Mammary epithelial cell (primary cell): ENCODE measurements at regions of chr9 and their contacts with region 1.

Region 1: DNA sequence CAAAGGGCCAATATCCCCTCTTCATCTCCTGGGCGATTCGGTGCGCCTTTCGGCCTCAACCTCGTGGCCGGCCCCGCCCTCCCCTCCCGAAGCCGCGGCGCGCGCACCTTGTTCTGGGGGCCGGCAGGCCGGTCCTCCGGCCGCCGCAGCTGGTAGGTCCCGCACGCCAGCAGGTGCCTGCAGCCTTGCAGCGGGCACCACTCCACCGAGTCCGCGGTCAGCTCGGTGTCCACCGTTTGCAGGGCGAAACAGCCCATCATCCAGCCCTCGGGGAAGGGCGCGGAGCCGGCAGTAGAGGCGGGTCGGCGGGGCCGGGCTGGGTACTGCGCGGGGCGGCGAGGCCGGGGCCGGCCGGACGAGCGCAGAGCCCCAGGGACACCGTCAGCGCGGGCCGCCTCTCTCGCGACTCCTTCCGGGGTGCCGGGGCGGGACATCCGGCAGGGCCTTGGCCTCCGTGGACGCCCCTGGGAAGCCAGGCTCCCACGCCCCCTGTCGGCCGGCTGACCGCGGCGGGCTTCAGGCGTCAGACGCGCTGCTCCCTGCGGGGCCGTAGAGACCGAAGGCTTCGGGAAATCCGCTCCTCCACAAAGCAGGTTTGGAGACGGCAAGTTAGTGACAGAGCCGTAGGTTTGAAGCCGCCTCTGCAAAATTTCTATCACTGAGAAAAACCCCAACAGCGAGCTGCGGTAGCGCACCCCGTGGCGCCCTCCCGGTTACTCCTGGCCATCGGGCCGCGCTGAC is at the start of gene DPH7:
- DNase-seq: peak; percentile 91
- H3K4me3 ChIP-seq: peak within 1 kb of the TSS; percentile 90 to 98 (median 98)
- H3K27ac ChIP-seq: peak within 1 kb of the TSS; percentile 48
- H3K4me1 ChIP-seq: peaks cover 26% of the 10 kb centered on the region
- H3K27me3 ChIP-seq: no peaks in the 10 kb centered on the region
- CTCF ChIP-seq: peak; percentile 78 to 94
- total RNA-seq, gene DPH7: 25.0 to 41.4 TPM

Region 2: DNA sequence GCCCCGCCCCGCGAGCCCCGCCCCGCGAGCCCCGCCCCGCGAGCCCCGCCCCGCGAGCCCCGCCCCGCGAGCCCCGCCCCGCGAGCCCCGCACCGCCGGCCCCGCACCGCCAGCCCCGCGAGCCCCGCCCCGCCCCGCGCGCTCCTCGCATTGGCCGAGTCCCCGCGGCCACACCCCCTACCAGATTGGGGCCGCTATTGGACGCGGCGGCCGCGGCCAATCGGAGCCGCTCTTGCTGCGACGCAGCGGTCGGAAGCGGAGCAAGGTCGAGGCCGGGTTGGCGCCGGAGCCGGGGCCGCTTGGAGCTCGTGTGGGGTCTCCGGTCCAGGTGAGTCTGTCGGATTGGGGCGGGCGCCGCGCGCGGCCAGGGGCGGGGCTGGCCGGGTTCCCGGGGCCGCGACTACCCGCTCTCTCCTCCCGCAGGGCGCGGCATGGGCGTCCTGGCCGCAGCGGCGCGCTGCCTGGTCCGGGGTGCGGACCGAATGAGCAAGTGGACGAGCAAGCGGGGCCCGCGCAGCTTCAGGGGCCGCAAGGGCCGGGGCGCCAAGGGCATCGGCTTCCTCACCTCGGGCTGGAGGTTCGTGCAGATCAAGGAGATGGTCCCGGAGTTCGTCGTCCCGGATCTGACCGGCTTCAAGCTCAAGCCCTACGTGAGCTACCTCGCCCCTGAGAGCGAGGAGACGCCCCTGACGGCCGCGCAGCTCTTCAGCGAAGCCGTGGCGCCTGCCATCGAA is 26.9 kb before region 1 on chr9 and contains the start of gene MRPL41:
- CTCF ChIA-PET with region 1: no interaction called
- dilution Hi-C with region 1: loop called (anchors 5 kb)
- in situ Hi-C with region 1: no loop called
- intact Hi-C with region 1: no loop called
- DNase-seq: peak; percentile 86
- H3K4me3 ChIP-seq: peak within 1 kb of the TSS; percentile 74 to 91 (median 80)
- H3K27ac ChIP-seq: peak within 1 kb of the TSS; percentile 31
- H3K4me1 ChIP-seq: peaks cover 16% of the 10 kb centered on the region
- H3K27me3 ChIP-seq: no peaks in the 10 kb centered on the region
- CTCF ChIP-seq: no peak
- total RNA-seq, gene MRPL41: 31.3 to 46.1 TPM

Region 3: DNA sequence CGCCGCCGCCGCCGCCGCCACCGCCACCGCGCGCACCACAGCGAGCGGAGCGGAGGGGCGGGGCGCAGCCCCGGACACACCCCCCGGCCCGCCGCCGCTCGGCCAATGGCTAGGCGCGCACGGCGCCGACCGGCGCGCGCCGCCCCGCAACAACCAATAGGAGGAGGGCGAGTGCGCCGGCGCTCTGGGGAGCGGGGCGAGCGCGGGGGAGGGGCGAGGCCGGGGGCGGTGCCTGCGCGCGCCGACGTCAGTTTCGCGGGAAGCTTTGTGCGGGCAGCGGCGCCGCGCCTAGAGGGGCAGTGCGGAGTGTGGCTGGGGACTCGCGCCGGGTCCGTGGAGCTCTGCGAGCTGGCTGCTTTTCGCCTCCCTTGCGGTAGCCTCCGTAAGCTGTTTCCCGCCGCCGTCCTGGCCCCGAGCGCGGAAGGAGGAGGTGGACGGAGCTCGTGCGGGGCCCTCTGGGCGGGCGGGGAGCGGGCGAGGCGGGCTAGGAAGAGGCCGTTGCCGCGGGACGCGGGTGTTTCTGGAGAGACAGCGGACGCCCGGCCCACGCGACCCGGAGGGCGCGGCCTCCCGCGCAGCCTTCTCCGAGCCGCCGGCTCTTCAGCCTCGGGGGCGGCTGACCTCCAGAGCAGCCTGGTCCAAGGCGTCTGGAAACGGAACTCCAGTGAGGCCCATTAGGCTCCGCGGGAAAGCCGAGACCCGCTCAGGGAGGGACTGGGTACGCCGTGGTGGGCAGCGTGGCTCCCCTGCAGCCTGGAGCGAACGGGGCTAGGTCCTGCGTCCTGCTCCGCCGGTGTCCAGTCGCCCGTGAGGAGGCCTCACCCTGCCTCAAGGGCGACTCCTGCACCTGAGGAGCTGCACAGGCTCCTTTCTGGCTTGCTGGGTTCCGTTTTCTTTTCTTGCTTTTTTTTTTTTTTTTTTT is 12.0 kb after region 1 on chr9 and contains the start of gene ZMYND19:
- CTCF ChIA-PET with region 1: no interaction called
- dilution Hi-C with region 1: no loop called
- in situ Hi-C with region 1: no loop called
- intact Hi-C with region 1: loop called (anchors 1 kb)
- DNase-seq: peak; percentile 83
- H3K4me3 ChIP-seq: peak within 1 kb of the TSS; percentile 76 to 97 (median 84)
- H3K27ac ChIP-seq: peak within 1 kb of the TSS; percentile 58
- H3K4me1 ChIP-seq: peaks cover 15% of the 10 kb centered on the region
- H3K27me3 ChIP-seq: no peaks in the 10 kb centered on the region
- CTCF ChIP-seq: no peak
- total RNA-seq, gene ZMYND19: 10.2 to 48.0 TPM

Region 4: GRCh38 chr9:137618105-137619067 is 39.7 kb after region 1 on chr9 and contains the start of gene EHMT1:
- CTCF ChIA-PET with region 1: interaction called, 3 read pairs
- dilution Hi-C with region 1: loop called (anchors 5 kb)
- in situ Hi-C with region 1: no loop called
- intact Hi-C with region 1: no loop called
- DNase-seq: peak; percentile 76
- H3K4me3 ChIP-seq: peak within 1 kb of the TSS; percentile 87 to 95 (median 88)
- H3K27ac ChIP-seq: peak within 1 kb of the TSS; percentile 75
- H3K4me1 ChIP-seq: peaks cover 27% of the 10 kb centered on the region
- H3K27me3 ChIP-seq: no peaks in the 10 kb centered on the region
- CTCF ChIP-seq: peak in 1 of 2 donors; percentile 10
- total RNA-seq, gene EHMT1: 55.0 to 83.4 TPM

Region 5: GRCh38 chr9:137660144-137660543 is 81.5 kb after region 1 on chr9:
- CTCF ChIA-PET with region 1: no interaction called
- dilution Hi-C with region 1: no loop called
- in situ Hi-C with region 1: no loop called
- intact Hi-C with region 1: no loop called
- DNase-seq: no peak
- H3K4me3 ChIP-seq: no peak overlapping the region
- H3K27ac ChIP-seq: no peak overlapping the region
- H3K4me1 ChIP-seq: no peaks in the 10 kb centered on the region
- H3K27me3 ChIP-seq: no peaks in the 10 kb centered on the region
- CTCF ChIP-seq: no peak